Mammary epithelial cell (primary cell): ENCODE measurements at regions of chr7 and their contacts with region 1.

Region 1: GRCh38 chr7:369476-370258 is 79.7 kb downstream of the FOXL3 start:
- DNase-seq: peak; percentile 78
- H3K4me3 ChIP-seq: peak overlapping the region in 2 of 3 experiments; percentile 4 to 36
- H3K27ac ChIP-seq: peak overlapping the region; percentile 69
- H3K4me1 ChIP-seq: peaks cover 43% of the 10 kb centered on the region
- H3K27me3 ChIP-seq: no peaks in the 10 kb centered on the region
- CTCF ChIP-seq: peak; percentile 38 to 48

Region 2: DNA sequence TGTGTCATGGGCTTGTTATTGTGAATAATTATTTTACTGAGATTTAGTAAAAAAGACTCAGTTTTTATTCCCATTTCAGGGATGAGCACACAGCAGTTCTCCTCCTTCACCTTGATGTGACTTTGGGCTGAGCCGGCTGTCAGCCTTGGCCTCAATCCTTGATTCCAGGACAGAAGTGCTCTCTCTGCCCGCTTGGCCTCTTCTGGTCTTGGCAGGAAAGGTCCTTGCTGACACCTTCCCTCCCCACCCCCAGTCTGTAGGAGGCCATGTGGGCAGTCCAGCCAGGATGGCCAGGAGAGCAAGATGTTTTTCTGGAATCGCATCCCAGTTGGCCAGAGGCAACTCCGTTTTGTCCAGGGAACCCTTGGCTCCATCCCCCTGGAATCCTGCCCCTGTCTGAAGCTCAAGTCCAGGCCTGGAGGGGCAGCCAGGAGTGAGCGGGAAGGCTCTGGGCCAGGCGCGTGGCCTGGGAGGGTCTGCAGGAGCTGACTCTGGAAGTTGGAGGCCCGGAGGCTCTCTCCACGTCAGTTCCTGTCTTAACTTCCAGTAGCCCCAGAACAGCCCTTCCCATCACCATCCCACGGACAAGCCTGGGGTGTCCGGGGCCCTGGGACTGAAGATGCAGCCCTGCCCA is 49.1 kb after region 1 on chr7:
- CTCF ChIA-PET with region 1: no interaction called
- dilution Hi-C with region 1: no loop called
- in situ Hi-C with region 1: no loop called
- intact Hi-C with region 1: no loop called
- DNase-seq: no peak
- H3K4me3 ChIP-seq: no peak overlapping the region
- H3K27ac ChIP-seq: no peak overlapping the region
- H3K4me1 ChIP-seq: no peaks in the 10 kb centered on the region
- H3K27me3 ChIP-seq: no peaks in the 10 kb centered on the region
- CTCF ChIP-seq: no peak

Region 3: DNA sequence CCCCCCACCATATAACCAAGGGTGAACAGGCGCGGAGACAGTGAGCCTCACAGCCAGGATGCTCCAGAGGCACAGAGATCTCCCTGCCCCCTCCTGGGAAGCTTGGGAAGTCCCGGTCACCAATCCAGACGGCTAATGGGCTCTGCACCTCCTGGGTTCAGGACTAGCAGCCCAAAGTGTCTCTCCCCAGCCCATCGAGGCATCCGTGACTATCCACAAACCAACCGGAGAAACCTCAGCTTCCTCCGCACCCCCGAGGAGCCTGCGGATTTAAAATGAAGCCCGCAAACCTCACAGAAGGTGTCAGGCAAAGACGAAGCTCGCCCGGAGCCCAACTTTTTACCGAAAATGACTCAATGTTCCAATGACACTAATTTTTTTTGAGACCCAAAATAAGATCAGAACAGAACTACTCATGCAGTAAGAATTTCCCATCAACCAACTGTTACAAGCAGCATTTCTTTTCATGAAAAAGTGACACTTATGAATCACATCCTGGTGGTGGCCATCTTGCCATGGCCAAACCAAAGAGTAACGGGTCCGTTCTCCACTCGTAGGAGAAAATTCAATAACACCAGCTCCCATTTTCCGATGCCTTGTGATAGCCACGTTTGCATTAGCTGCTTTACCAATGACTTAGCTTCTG is 144.0 kb after region 1 on chr7:
- CTCF ChIA-PET with region 1: no interaction called
- dilution Hi-C with region 1: no loop called
- in situ Hi-C with region 1: no loop called
- intact Hi-C with region 1: loop called (anchors 1 kb)
- DNase-seq: peak; percentile 55
- H3K4me3 ChIP-seq: peak overlapping the region in 1 of 3 experiments; percentile 7
- H3K27ac ChIP-seq: peak overlapping the region; percentile 44
- H3K4me1 ChIP-seq: peaks cover 50% of the 10 kb centered on the region
- H3K27me3 ChIP-seq: no peaks in the 10 kb centered on the region
- CTCF ChIP-seq: peak in 1 of 2 donors; percentile 36